Body of pancreas (tissue), 4 donors: ENCODE measurements at regions of chr20 and their contacts with region 1.

Region 1: GRCh38 chr20:31842471-31843157 is 2.8 kb downstream of the FOXS1 start:
- DNase-seq: peak in 1 of 4 donors; percentile 34
- ATAC-seq: peak; percentile 36
- H3K4me3 ChIP-seq: no peak overlapping the region
- H3K27ac ChIP-seq: peak overlapping the region in 1 of 4 donors; percentile 37
- H3K4me1 ChIP-seq: no peaks in the 10 kb centered on the region
- H3K27me3 ChIP-seq: no peaks in the 10 kb centered on the region
- CTCF ChIP-seq: no peak
- POLR2A ChIP-seq: no peak

Region 2: GRCh38 chr20:31956556-31957526 is 114.2 kb after region 1 on chr20:
- intact Hi-C with region 1: loop called (anchors 5 kb)
- DNase-seq: no peak
- ATAC-seq: no peak
- H3K4me3 ChIP-seq: no peak overlapping the region
- H3K27ac ChIP-seq: no peak overlapping the region
- H3K4me1 ChIP-seq: no peaks in the 10 kb centered on the region
- H3K27me3 ChIP-seq: no peaks in the 10 kb centered on the region
- CTCF ChIP-seq: no peak
- POLR2A ChIP-seq: no peak